ENCODE measurements at regions of chr14 and their contacts with region 1.

Region 1: DNA sequence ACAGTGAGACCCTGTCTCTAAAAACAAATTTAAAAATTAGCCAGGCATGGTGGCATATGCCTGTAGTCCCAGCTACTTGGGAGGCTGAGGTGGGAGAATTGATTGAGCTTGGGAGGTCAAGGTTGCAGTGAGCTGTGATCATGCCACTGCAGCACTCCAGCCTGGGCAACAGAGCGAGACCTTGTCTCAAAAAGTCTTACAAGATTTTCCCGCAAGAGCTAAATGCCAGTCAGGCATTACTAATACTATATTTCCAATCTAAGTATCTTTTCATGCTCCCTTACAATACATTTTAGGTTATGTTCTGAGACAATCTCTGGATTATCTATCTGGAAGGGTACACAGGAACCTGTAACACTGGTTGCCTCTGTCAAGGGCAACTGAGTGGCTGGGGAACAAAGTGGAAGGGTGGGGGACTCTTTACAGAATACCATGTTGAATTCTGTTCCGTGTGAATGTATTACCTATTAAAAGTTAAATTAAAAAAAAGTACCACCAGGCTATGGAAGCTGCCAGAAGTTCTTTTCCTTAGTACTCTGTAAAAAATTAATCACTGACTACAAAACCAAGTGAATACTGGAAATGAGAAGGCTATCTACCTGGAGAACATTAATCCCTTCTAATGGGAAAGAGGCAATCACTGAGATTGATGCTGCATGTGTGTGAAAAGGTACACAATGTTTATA is 56.7 kb downstream of the BTBD7 start:
- DNase-seq: no peak
- ATAC-seq: no peak
- H3K4me3 ChIP-seq: no peak overlapping the region
- H3K27ac ChIP-seq: no peak overlapping the region
- H3K4me1 ChIP-seq: peaks cover 0 to 15% (median 4%) of the 10 kb centered on the region in 12 donors
- H3K27me3 ChIP-seq: no peaks in the 10 kb centered on the region
- CTCF ChIP-seq: no peak
- POLR2A ChIP-seq: no peak

Region 2: GRCh38 chr14:93317875-93318807 is 42.0 kb after region 1 on chr14:
- intact Hi-C with region 1: loop called in 1 of 10 experiments (anchors 5 kb)
- DNase-seq: no peak
- ATAC-seq: no peak
- H3K4me3 ChIP-seq: no peak overlapping the region
- H3K27ac ChIP-seq: peak overlapping the region in 1 of 12 donors; percentile 53
- H3K4me1 ChIP-seq: peaks cover 0 to 53% (median 27%) of the 10 kb centered on the region in 12 donors
- H3K27me3 ChIP-seq: no peaks in the 10 kb centered on the region
- CTCF ChIP-seq: no peak
- POLR2A ChIP-seq: no peak

Region 3: GRCh38 chr14:93543766-93544165 is 267.6 kb after region 1 on chr14:
- intact Hi-C with region 1: no loop called
- DNase-seq: no peak
- ATAC-seq: no peak
- H3K4me3 ChIP-seq: no peak overlapping the region
- H3K27ac ChIP-seq: no peak overlapping the region
- H3K4me1 ChIP-seq: peaks cover 0 to 4% (median 0%) of the 10 kb centered on the region in 12 donors
- H3K27me3 ChIP-seq: peaks cover 0 to 4% (median 0%) of the 10 kb centered on the region in 9 donors
- CTCF ChIP-seq: peak in 9 of 12 donors; percentile 6 to 53 (median 19)
- POLR2A ChIP-seq: no peak

Measured in heart left ventricle (tissue), 16 donors.